AG04449 (cell line): ENCODE measurements at regions of chr6 and their contacts with region 1.

Region 1: GRCh38 chr6:37207903-37208456 is 38.0 kb downstream of the PIM1 start:
- DNase-seq: no peak
- H3K4me3 ChIP-seq: no peak overlapping the region
- CTCF ChIP-seq: peak; percentile 84

Region 2: GRCh38 chr6:36678518-36679027 is 529.4 kb before region 1 on chr6 and contains the start of gene CDKN1A:
- CTCF ChIA-PET with region 1: no interaction called
- POLR2A ChIA-PET with region 1: no interaction called
- DNase-seq: no peak
- H3K4me3 ChIP-seq: peak within 1 kb of the TSS; percentile 91
- CTCF ChIP-seq: no peak

Region 3: GRCh38 chr6:36979347-36979742 is 228.6 kb before region 1 on chr6:
- CTCF ChIA-PET with region 1: interaction called, 11 read pairs
- POLR2A ChIA-PET with region 1: no interaction called
- DNase-seq: no peak
- H3K4me3 ChIP-seq: no peak overlapping the region
- CTCF ChIP-seq: peak; percentile 86

Region 4: GRCh38 chr6:37038292-37039198 is 169.4 kb before region 1 on chr6:
- CTCF ChIA-PET with region 1: interaction called, 1,706 read pairs
- POLR2A ChIA-PET with region 1: no interaction called
- DNase-seq: no peak
- H3K4me3 ChIP-seq: no peak overlapping the region
- CTCF ChIP-seq: no peak

Region 5: DNA sequence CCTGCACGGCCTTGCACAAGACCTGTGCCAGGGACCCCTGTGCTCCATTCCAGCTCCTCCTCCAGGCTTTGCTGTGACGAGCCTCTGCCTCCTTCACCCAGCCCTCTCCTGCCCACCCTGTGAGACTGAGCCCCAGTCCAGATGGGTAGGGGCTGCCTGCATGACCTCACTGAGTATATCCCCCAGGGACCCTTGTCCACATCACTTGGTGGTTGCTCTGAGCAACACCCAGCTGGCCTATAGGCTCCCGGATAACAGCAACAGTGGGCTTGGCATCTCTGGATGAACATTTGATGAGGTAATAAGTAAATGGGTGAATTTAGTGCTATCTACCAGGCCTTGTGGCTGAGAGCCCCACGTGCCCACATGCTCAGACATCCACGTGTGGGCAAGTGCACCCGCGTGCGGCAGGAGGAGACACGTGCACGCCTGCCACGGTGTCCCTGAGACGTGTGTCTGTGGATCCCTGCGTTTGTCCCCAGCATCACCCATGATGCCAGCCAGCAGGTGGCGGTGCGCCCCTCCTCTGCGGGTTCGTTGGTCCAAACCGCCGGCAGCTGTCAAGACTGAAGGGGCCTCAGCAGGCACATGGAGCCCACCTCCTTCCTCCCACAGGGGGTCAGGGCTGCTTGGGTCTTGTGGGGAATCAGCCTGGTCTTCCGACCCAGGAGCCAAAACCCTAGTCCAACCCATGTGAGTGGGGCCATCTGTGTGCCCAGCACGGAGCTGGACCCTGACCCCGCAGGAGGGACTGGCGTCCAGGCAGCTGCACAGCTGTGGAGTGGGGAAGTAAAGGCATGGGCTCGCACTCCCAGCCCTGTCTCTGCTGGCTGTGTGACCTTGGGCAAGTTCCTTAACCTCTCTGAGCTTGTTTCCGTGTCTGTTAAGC is 156.6 kb before region 1 on chr6:
- CTCF ChIA-PET with region 1: interaction called, 337 read pairs
- POLR2A ChIA-PET with region 1: no interaction called
- DNase-seq: no peak
- H3K4me3 ChIP-seq: peak overlapping the region; percentile 1; the same call in 1 of the 2 replicates
- CTCF ChIP-seq: peak; percentile 96

Region 6: DNA sequence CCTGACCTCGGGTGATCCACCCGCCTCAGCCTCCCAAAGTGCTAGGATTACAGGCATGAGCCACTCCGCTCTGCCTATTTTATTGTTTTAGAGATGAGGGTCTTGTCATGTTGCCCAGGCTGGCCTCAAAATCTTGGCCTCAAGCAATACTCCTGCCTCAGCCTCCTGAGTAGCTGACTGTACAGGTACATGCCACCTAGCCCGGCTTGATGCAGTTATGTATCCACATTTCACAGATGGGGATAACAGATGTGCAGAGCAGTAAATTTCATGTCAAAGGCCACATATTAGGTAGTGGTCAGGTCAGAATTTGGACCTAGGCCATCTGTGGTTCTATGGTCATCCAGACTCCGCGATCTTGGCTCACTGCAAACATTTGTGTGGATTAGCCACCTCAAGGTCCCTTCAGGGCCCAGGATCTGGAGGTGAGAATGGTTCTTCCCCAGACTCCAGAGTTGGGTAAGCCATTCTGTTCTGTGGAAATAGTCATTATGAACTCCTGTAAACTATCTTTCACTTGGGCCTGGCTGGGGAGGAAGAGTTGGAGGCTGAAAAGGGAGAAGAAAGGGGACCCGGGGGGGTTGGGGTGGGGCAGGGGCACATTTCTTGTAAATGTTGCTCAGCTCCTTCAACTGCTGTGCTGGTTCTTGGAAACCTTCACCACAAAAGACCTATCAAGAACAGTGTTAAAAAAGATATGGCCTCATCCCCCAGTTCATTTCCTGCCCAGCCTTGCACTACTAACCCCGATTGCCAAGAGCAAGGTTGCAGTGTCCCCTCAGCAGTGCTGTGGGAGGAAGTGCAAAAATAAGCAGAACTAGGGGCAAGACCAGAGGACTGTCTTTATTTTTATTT is 25.0 kb before region 1 on chr6:
- CTCF ChIA-PET with region 1: interaction called, 180 read pairs
- POLR2A ChIA-PET with region 1: no interaction called
- DNase-seq: no peak
- H3K4me3 ChIP-seq: no peak overlapping the region
- CTCF ChIP-seq: no peak

Region 7: DNA sequence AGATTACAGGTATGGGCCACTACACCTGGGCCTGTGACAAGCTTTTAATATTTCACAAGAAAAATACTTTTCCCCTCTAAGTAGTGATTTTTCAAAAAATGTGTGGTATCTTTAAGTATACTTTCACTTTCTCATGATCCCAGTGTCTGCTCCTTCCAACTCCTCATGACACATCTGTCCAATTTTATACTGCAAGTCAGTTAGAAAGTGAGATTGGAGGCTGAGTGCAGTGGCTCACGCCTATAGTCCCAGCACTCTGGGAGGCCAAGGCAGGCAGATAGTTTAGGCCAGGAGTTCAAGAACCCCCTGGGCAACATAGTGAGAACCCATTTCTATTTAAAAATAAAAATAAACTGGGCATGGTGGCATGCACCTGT is 17.8 kb before region 1 on chr6:
- CTCF ChIA-PET with region 1: interaction called, 85 read pairs
- POLR2A ChIA-PET with region 1: no interaction called
- DNase-seq: no peak
- H3K4me3 ChIP-seq: no peak overlapping the region
- CTCF ChIP-seq: no peak

Region 8: DNA sequence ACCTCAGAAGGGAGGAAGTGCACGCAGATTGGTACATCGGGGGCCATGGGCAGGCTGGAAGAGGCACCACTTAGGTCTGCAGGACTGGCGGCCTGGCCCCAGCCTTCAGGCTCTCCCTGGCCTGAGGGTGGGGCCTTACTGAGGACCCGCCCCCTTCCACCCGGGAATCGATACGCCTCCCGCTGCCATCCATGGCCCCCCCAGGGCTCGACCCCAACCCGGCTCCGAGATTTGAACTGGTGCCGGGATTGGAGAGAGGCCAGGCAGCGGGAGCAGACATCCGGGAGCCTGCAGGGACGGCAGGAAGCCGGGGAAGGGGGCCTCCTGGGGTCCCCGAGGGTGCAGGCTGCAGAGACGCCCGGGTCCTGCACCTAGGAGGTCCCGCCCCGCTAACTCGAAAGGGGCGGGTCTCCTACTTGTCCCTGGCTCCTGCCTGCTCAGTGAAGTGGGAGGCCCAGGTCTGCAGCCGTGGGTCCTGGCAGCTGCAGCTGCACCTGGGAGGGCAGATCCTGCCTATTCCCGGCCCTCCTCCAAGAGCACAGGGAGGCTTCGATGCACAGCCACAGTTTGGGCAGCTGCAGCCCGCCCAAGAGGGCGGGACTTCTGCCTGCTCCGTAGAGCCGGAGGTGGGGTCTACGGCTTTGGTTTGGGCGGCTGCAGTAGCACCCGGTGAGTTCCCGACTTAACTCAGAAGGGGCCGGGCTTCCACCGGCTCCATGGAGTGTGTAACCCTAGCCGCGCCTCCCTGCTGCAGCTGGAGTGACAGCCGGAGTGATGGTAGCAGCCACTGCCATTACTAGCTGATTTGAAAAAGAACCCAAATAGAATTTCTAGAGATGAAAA is 14.4 kb after region 1 on chr6:
- CTCF ChIA-PET with region 1: interaction called, 62 read pairs
- POLR2A ChIA-PET with region 1: no interaction called
- DNase-seq: no peak
- H3K4me3 ChIP-seq: peak overlapping the region; percentile 64
- CTCF ChIP-seq: no peak